Psoas muscle (tissue), 8 donors: ENCODE measurements at regions of chrX and their contacts with region 1.

Region 1: DNA sequence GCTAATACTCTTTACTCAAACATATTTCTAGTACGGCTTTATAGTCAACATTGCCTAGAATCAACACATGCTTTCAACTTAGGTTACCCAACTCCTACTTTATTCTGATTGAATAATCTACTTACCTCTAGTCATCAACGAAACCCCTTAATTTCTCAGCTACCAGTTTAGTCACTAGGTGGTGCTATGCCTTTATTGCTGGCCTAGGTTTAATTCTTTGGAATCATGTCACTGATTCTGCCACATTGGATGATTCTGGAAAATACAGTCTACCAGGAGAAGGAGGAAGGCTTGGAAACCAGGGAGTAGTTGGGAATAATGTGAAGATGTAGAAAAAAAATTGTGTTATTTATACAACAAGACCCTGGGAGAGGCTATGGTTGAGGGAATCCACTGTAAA is 167.7 kb downstream of the DCAF12L2 start:
- DNase-seq: no peak
- ATAC-seq: no peak
- H3K4me3 ChIP-seq: no peak overlapping the region
- H3K27ac ChIP-seq: no peak overlapping the region
- H3K4me1 ChIP-seq: no peaks in the 10 kb centered on the region
- H3K27me3 ChIP-seq: no peaks in the 10 kb centered on the region
- CTCF ChIP-seq: peak; percentile 9

Region 2: GRCh38 chrX:125947501-125947900 is 50.9 kb before region 1 on chrX:
- intact Hi-C with region 1: loop called in 1 of 2 experiments (anchors 10 kb)
- DNase-seq: no peak
- ATAC-seq: no peak
- H3K4me3 ChIP-seq: no peak overlapping the region
- H3K27ac ChIP-seq: no peak overlapping the region
- H3K4me1 ChIP-seq: no peaks in the 10 kb centered on the region
- H3K27me3 ChIP-seq: no peaks in the 10 kb centered on the region
- CTCF ChIP-seq: no peak